ENCODE measurements at regions of chr14 and their contacts with region 1.

Region 1: GRCh38 chr14:95098984-95099599 is 58.2 kb downstream of the DICER1 start:
- DNase-seq: peak; percentile 40
- ATAC-seq: peak; percentile 92
- H3K4me3 ChIP-seq: no peak overlapping the region
- H3K27ac ChIP-seq: no peak overlapping the region
- H3K4me1 ChIP-seq: no peaks in the 10 kb centered on the region
- H3K27me3 ChIP-seq: no peaks in the 10 kb centered on the region
- CTCF ChIP-seq: peak; percentile 55 to 79 (median 79); a peak in 5 of 6 replicates
- POLR2A ChIP-seq: no peak
- RAD21 ChIP-seq: peak; percentile 62

Region 2: GRCh38 chr14:94689218-94689984 is 409.7 kb before region 1 on chr14:
- CTCF ChIA-PET with region 1: interaction called, 5 read pairs
- POLR2A ChIA-PET with region 1: no interaction called
- RAD21 ChIA-PET with region 1: interaction called in 1 of 2 experiments, 3 read pairs
- intact Hi-C with region 1: loop called (anchors 1 kb)
- DNase-seq: no peak
- ATAC-seq: peak; percentile 99
- H3K4me3 ChIP-seq: peak overlapping the region; percentile 24 to 29; a peak in 3 of 4 replicates
- H3K27ac ChIP-seq: no peak overlapping the region
- H3K4me1 ChIP-seq: peaks cover 0 to 8% of the 10 kb centered on the region in 2 experiments; a peak in 1 of 4 replicates
- H3K27me3 ChIP-seq: no peaks in the 10 kb centered on the region
- CTCF ChIP-seq: peak; percentile 90 to 97 (median 96)
- POLR2A ChIP-seq: no peak
- RAD21 ChIP-seq: peak; percentile 98

Region 3: GRCh38 chr14:94823556-94824338 is 275.3 kb before region 1 on chr14:
- CTCF ChIA-PET with region 1: interaction called, 4 read pairs
- POLR2A ChIA-PET with region 1: no interaction called
- RAD21 ChIA-PET with region 1: no interaction called
- intact Hi-C with region 1: loop called (anchors 5 kb)
- DNase-seq: peak; percentile 76
- ATAC-seq: peak; percentile 96
- H3K4me3 ChIP-seq: no peak overlapping the region
- H3K27ac ChIP-seq: peak overlapping the region; percentile 14; the same call in 1 of the 2 replicates
- H3K4me1 ChIP-seq: peaks cover 9 to 20% of the 10 kb centered on the region in 2 experiments
- H3K27me3 ChIP-seq: no peaks in the 10 kb centered on the region
- CTCF ChIP-seq: peak; percentile 25 to 75 (median 67); a peak in 5 of 6 replicates
- POLR2A ChIP-seq: no peak
- RAD21 ChIP-seq: peak; percentile 26; the same call in 1 of the 2 replicates

Region 4: GRCh38 chr14:95068080-95068479 is 31.0 kb before region 1 on chr14:
- CTCF ChIA-PET with region 1: no interaction called
- POLR2A ChIA-PET with region 1: no interaction called
- RAD21 ChIA-PET with region 1: no interaction called
- intact Hi-C with region 1: no loop called
- DNase-seq: no peak
- ATAC-seq: no peak
- H3K4me3 ChIP-seq: no peak overlapping the region
- H3K27ac ChIP-seq: no peak overlapping the region
- H3K4me1 ChIP-seq: no peaks in the 10 kb centered on the region
- H3K27me3 ChIP-seq: no peaks in the 10 kb centered on the region; the same call in 1 of the 2 replicates
- CTCF ChIP-seq: no peak
- POLR2A ChIP-seq: no peak
- RAD21 ChIP-seq: no peak

Measured in HCT116 (cell line).